ENCODE measurements at regions of chr3 and their contacts with region 1.

Region 1: DNA sequence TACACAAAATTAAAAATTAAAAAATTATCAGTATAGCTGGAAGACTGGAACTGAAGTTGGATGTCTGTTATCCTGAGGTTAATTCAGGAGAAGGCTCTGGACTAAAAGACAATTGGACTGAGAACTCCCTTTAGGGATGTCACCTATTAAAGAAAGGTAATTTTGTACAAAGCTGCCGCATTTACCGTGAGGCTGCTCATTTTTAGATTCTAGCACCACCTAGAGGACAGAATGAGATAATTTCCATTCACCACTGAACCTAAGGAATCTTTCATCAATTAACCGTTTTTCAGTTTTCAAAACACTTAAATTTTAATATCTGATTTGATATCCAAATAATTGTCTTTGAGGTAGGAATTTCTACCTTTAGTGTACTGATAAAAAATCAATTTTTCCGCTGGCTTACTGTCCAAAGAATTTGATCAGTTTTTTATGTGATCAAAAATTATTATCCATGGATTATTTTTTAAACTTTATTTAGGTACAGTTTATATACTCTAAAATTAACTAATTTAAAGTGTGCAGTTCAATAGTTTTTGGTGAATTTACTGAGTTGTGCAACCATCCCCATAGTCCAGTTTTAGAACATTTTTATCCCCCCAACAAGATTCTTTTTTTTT is 106.7 kb upstream of the TNIK start:
- DNase-seq: peak in 5 of 42 donors; percentile 8 to 53 (median 18)

Region 2: GRCh38 chr3:170961616-170962400 is 605.1 kb before region 1 on chr3:
- intact Hi-C with region 1: loop called (anchors 2 kb)
- DNase-seq: peak in 39 of 42 donors; percentile 13 to 82 (median 51)

Region 3: DNA sequence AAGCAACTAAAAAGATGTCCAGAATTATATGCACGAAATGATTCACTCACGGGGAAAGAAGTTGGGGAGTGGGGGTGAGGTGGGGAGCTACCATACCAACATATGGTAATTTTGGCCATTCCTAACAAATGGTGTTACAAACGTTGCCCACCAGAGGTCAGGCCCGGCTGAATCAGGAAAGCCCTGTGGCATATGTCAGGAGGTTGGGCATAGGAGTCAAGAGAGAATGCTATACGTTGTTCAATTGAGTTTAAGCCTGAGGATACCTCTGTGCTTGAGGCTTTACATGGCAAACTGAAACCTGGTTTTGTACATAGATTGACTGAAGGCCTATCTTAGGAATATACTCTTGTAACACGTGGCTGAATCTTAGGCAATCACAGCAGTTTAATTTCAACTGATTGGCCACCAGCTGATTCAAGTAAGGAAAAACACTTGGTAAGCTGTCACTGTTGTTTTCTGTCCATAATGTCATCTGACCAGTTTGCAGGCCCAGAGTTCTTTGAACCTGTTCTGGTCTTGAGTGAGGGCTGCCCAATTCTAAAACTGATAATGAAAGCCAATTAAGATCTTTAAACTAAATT is 517.0 kb before region 1 on chr3:
- intact Hi-C with region 1: loop called (anchors 5 kb)
- DNase-seq: peak in 41 of 42 donors; percentile 18 to 84 (median 59)

Region 4: GRCh38 chr3:171187706-171188290 is 379.1 kb before region 1 on chr3:
- intact Hi-C with region 1: loop called (anchors 2 kb)
- DNase-seq: peak in 16 of 42 donors; percentile 9 to 75 (median 40)

Region 5: DNA sequence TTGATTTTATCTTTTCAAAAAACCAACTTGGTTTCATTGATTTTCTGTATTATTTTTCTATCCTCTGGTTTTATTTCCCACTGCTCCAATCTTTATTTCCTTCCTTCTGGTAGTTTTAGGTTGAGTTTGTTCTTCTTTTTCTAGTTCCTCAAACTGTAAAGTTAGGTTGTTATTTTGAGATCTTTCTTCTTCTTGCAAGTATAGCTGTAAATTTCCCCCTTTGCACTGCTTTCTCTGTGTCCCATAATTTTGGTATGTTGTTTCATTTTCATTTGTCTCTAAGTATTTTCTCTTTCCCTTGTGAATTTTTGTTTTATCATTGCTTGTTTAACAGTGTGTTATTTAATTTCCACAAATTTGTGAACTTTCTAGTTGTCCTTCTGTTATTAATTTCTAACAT is 123.4 kb after region 1 on chr3:
- intact Hi-C with region 1: no loop called
- DNase-seq: no peak

Measured in head of caudate nucleus (tissue), 42 donors.